Heart left ventricle (tissue), 16 donors: ENCODE measurements at regions of chr12 and their contacts with region 1.

Region 1: DNA sequence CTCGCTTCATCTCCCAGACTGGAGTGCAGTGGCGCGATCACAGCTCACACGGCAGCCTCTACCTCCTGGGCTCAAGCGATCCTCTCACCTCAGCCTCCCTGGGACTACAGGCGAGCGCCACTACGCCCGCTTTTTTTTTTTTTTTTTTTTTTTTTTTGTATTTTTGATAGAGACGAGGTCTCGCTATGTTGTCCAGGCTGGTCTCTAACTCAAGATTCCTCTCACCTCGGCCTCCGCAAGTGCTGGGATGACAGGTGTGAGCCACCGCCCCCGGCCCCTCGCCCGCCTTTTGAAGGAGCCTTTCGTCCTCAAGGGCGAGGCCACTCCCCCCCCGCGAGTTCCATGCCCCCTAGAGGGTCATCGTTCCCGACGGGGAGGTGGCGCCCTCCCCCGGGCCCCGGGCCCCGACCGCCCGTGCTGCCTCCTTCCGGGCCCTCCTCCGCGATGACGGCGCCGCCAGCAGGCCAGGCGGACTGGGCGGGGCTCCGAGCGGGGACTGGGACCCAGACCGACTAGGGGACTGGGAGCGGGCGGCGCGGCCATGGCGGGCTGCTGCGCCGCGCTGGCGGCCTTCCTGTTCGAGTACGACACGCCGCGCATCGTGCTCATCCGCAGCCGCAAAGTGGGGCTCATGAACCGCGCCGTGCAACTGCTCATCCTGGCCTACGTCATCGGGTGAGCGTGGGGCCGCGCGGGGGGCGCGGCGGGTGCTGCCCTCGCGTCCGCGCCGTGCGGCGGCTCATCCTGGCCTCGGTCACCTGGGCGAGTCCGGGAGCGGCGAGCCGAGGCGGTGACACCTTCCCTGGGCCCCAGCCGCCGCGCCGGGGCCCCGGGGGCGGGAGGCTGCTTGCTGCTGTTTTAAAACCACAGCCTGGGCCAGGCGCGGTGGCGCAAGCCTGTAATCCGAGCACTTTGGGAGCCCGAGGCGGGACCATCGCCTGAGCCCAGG is at the start of gene P2RX4:
- DNase-seq: peak; percentile 85 to 95 (median 89)
- ATAC-seq: peak; percentile 74 to 94 (median 92)
- H3K4me3 ChIP-seq: peak within 1 kb of the TSS; percentile 52 to 97 (median 76)
- H3K27ac ChIP-seq: peak within 1 kb of the TSS; percentile 57 to 95 (median 84)
- H3K4me1 ChIP-seq: peaks cover 0 to 51% (median 9%) of the 10 kb centered on the region in 12 donors
- H3K27me3 ChIP-seq: no peaks in the 10 kb centered on the region
- CTCF ChIP-seq: peak in 9 of 12 donors; percentile 12 to 51 (median 27)
- POLR2A ChIP-seq: peak in 1 of 2 donors; percentile 85
- total RNA-seq, gene P2RX4: 3.2 to 27.4 (median 7.7) TPM

Region 2: GRCh38 chr12:121128970-121129810 is 80.7 kb before region 1 on chr12:
- intact Hi-C with region 1: loop called in 3 of 10 experiments (anchors 10 kb)
- DNase-seq: peak; percentile 84 to 91 (median 85)
- ATAC-seq: peak; percentile 59 to 88 (median 82)
- H3K4me3 ChIP-seq: peak overlapping the region in 9 of 12 donors; percentile 1 to 48 (median 20)
- H3K27ac ChIP-seq: peak overlapping the region; percentile 2 to 96 (median 62)
- H3K4me1 ChIP-seq: peaks cover 0 to 49% (median 26%) of the 10 kb centered on the region in 12 donors
- H3K27me3 ChIP-seq: no peaks in the 10 kb centered on the region
- CTCF ChIP-seq: no peak
- POLR2A ChIP-seq: no peak